ENCODE measurements at regions of chr3 and their contacts with region 1.

Region 1: GRCh38 chr3:52685709-52686691 is at the starts of genes GNL3 and PBRM1:
- DNase-seq: peak; percentile 98
- H3K4me3 ChIP-seq: peak within 1 kb of the TSS; percentile 94
- H3K27ac ChIP-seq: peak within 1 kb of the TSS; percentile 81
- H3K4me1 ChIP-seq: peaks cover 44% of the 10 kb centered on the region
- CTCF ChIP-seq: no peak
- total RNA-seq, gene GNL3: 220 and 232 TPM in 2 replicates
- total RNA-seq, gene PBRM1: 67.2 and 75.7 TPM in 2 replicates

Region 2: DNA sequence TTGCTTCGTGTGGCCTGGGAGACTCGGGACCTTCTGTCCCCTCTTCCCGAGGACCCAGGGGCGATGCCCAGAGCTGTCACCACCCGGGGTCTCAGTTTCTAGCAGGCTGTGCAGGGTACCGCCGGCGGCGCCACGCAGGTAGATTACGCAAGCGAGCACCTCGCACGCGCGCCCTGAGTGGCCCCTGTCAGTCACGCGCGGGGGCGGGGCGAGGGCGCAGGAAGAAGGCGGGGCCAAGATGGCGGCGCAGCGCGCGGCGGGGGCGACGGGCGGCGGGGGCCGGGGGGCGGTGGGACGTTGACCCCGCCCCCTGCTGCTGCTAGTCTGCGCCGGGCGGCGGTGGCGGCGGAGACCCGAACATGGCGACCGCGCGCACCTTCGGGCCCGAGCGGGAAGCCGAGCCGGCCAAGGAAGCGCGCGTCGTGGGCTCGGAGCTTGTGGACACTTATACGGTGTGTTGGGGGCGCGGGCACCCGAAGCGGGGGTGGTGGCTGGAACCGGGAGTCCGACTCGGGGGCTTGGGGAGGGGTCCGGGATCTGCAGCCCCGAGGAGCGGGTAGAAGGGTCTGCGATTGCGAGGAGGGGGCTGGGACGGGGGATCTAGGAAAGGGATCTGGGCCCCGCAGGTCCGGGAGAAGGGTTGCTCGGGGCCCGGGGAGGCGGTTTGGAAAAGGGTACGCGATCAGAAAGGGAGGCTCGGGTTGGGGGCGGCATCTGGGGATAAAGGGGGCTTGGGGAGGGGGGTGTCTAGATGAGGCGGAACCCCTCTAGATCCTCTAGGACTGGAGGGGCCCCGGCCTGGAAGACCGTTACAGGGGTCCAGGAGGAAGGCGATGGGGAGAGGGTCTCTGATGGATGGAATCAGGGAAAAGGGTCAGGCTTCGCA is 230.5 kb before region 1 on chr3 and contains the start of gene NISCH:
- CTCF ChIA-PET with region 1: no interaction called
- POLR2A ChIA-PET with region 1: no interaction called
- intact Hi-C with region 1: loop called (anchors 5 kb)
- DNase-seq: peak; percentile 93
- H3K4me3 ChIP-seq: peak within 1 kb of the TSS; percentile 99
- H3K27ac ChIP-seq: peak within 1 kb of the TSS; percentile 52
- H3K4me1 ChIP-seq: peaks cover 31% of the 10 kb centered on the region
- CTCF ChIP-seq: no peak
- total RNA-seq, gene NISCH: 53.8 and 60.5 TPM in 2 replicates

Region 3: GRCh38 chr3:52536369-52537164 is 149.4 kb before region 1 on chr3 and contains the start of gene UQCC5:
- CTCF ChIA-PET with region 1: no interaction called
- POLR2A ChIA-PET with region 1: no interaction called
- intact Hi-C with region 1: loop called (anchors 1 kb)
- DNase-seq: peak; percentile 99
- H3K4me3 ChIP-seq: peak within 1 kb of the TSS; percentile 90
- H3K27ac ChIP-seq: peak within 1 kb of the TSS; percentile 51
- H3K4me1 ChIP-seq: peaks cover 56% of the 10 kb centered on the region
- CTCF ChIP-seq: no peak; the same call in 1 of the 2 replicates
- total RNA-seq, gene UQCC5: 12.0 and 18.4 TPM in 2 replicates

Region 4: GRCh38 chr3:52705688-52706686 is 20.0 kb after region 1 on chr3 and contains the starts of genes GLT8D1 and SPCS1:
- CTCF ChIA-PET with region 1: no interaction called
- POLR2A ChIA-PET with region 1: interaction called, 44 read pairs
- intact Hi-C with region 1: loop called (anchors 1 kb)
- DNase-seq: peak; percentile 92
- H3K4me3 ChIP-seq: peak within 1 kb of the TSS; percentile 95
- H3K27ac ChIP-seq: peak within 1 kb of the TSS; percentile 63
- H3K4me1 ChIP-seq: peaks cover 47% of the 10 kb centered on the region
- CTCF ChIP-seq: no peak
- total RNA-seq, gene GLT8D1: 35.6 and 39.6 TPM in 2 replicates
- total RNA-seq, gene SPCS1: 46.6 and 58.1 TPM in 2 replicates

Region 5: GRCh38 chr3:53045518-53046170 is 359.6 kb after region 1 on chr3 and contains the start of gene SFMBT1:
- CTCF ChIA-PET with region 1: no interaction called
- POLR2A ChIA-PET with region 1: no interaction called
- intact Hi-C with region 1: loop called (anchors 5 kb)
- DNase-seq: peak; percentile 82
- H3K4me3 ChIP-seq: peak within 1 kb of the TSS; percentile 85
- H3K27ac ChIP-seq: peak within 1 kb of the TSS; percentile 55
- H3K4me1 ChIP-seq: peaks cover 22% of the 10 kb centered on the region
- CTCF ChIP-seq: no peak
- total RNA-seq, gene SFMBT1: 8.0 and 18.1 TPM in 2 replicates